Activated T-helper 2 cell treated with anti-CD3 and anti-CD28 coated beads, Interferon-gamma antibody, Interleukin-2, Interleukin-4, amounts not matched to agents 10 μg/mL and 5 μg/mL and 100 μg/mL, durations not matched to agents 14 hours and 24 hours and 36 hours (primary cell): ENCODE measurements at regions of chr2 and their contacts with region 1.

Region 1: GRCh38 chr2:84881581-84882414 is 914 bp upstream of the TRABD2A start:
- DNase-seq: peak; percentile 82
- H3K4me3 Mint-ChIP-seq: peak overlapping the region; percentile 91
- H3K27ac Mint-ChIP-seq: peak overlapping the region; percentile 95
- H3K4me1 Mint-ChIP-seq: peaks cover 48% of the 10 kb centered on the region
- H3K27me3 Mint-ChIP-seq: no peaks in the 10 kb centered on the region

Region 2: GRCh38 chr2:84649487-84650142 is 232.2 kb before region 1 on chr2:
- intact Hi-C with region 1: loop called (anchors 10 kb)
- DNase-seq: no peak
- H3K4me3 Mint-ChIP-seq: no peak overlapping the region
- H3K27ac Mint-ChIP-seq: no peak overlapping the region
- H3K4me1 Mint-ChIP-seq: peaks cover 65% of the 10 kb centered on the region
- H3K27me3 Mint-ChIP-seq: no peaks in the 10 kb centered on the region

Region 3: GRCh38 chr2:84817239-84817655 is 64.6 kb before region 1 on chr2:
- intact Hi-C with region 1: loop called (anchors 2 kb)
- DNase-seq: no peak
- H3K4me3 Mint-ChIP-seq: no peak overlapping the region
- H3K27ac Mint-ChIP-seq: peak overlapping the region; percentile 31
- H3K4me1 Mint-ChIP-seq: peaks cover 29% of the 10 kb centered on the region
- H3K27me3 Mint-ChIP-seq: no peaks in the 10 kb centered on the region

Region 4: DNA sequence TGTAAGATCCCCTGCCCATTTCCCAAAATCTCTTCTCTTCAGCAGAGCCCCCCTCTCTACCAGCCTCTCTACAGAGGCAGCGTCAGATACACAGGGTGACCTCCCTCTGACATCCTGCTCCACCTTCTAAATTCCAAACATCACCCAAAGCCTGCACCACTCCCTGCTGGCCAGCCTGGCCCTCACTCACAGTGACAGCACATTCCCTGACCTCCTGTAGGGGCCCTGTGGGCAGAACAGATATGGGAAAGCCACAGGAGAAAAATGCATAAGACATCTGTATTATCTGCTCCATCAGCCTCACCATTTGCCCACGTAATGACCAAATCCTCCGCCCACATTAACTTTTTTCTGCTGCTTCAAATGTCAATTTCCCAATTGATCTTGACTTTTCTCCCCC is 41.5 kb before region 1 on chr2:
- intact Hi-C with region 1: no loop called
- DNase-seq: no peak
- H3K4me3 Mint-ChIP-seq: peak overlapping the region; percentile 59
- H3K27ac Mint-ChIP-seq: peak overlapping the region; percentile 21
- H3K4me1 Mint-ChIP-seq: peaks cover 50% of the 10 kb centered on the region
- H3K27me3 Mint-ChIP-seq: no peaks in the 10 kb centered on the region

Region 5: DNA sequence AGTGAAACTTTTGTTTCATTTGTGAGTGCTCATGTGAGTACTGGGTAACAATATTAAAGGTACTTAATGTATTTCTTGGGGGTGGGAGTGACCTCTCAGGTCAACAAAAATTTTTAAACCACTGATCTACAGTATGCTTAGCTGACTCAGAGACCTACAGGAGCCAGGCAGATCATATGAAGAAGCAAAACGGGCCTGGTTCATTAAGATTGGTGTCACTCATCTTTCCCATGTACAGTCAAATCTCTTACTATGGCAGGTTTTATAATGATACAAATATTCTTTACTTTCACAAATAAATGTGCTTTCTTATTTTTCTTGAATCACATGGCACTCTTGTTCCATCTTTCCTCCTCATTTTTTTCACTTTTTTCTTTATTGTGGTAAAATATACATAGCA is 16.0 kb after region 1 on chr2:
- intact Hi-C with region 1: loop called (anchors 2 kb)
- DNase-seq: no peak
- H3K4me3 Mint-ChIP-seq: no peak overlapping the region
- H3K27ac Mint-ChIP-seq: peak overlapping the region; percentile 95
- H3K4me1 Mint-ChIP-seq: peaks cover 56% of the 10 kb centered on the region
- H3K27me3 Mint-ChIP-seq: no peaks in the 10 kb centered on the region